ENCODE measurements at regions of chr9 and their contacts with region 1.

Region 1: DNA sequence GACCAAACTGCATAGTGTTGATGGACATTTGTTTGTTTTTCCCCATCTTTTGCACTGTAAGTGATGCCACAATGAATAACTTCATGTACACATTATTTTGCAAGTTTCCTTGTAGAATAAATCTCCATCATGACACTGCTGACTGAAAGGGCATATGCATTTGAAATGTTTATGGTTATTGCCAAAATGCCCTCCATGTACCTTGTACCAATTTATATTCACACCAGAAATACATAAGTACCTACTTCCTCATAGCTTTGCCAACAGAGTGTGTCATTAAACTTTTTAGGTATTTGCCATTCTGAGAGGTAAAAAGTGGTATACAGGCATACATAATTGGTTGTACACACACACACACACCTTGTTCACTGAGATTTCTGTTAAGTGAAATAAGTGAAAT is 361.0 kb upstream of the PCSK5 start:
- DNase-seq: no peak
- H3K4me3 ChIP-seq: no peak overlapping the region
- H3K27ac ChIP-seq: no peak overlapping the region
- H3K4me1 ChIP-seq: no peaks in the 10 kb centered on the region
- H3K27me3 ChIP-seq: no peaks in the 10 kb centered on the region
- CTCF ChIP-seq: no peak

Region 2: DNA sequence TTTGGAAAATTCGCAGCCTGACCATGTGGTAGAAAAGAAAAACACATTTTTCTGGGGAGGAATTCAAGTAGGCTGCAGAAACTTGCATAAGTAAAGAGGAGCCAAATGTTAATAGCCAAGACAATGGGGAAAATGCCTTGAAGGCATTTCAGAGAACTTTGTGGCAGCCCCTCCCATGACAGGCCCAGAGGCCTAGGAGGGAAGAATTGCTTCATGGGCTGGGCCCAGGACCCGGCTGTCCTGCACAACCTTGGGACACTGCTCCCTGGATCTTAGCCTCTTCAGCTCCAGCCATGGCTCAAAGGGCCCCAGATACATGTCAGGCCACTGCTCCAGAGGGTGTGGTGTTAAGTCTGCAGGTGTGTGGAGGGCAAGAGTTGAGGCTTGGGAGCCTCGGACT is 282.5 kb before region 1 on chr9:
- CTCF ChIA-PET with region 1: no interaction called
- POLR2A ChIA-PET with region 1: no interaction called
- intact Hi-C with region 1: no loop called
- DNase-seq: no peak
- H3K4me3 ChIP-seq: no peak overlapping the region
- H3K27ac ChIP-seq: no peak overlapping the region
- H3K4me1 ChIP-seq: no peaks in the 10 kb centered on the region
- H3K27me3 ChIP-seq: peaks cover 7% of the 10 kb centered on the region
- CTCF ChIP-seq: no peak

Region 3: GRCh38 chr9:75588809-75589208 is 59.3 kb after region 1 on chr9:
- CTCF ChIA-PET with region 1: no interaction called
- POLR2A ChIA-PET with region 1: no interaction called
- intact Hi-C with region 1: loop called (anchors 10 kb)
- DNase-seq: no peak
- H3K4me3 ChIP-seq: no peak overlapping the region
- H3K27ac ChIP-seq: no peak overlapping the region
- H3K4me1 ChIP-seq: no peaks in the 10 kb centered on the region
- H3K27me3 ChIP-seq: no peaks in the 10 kb centered on the region
- CTCF ChIP-seq: no peak

Region 4: GRCh38 chr9:75909776-75910175 is 380.3 kb after region 1 on chr9:
- CTCF ChIA-PET with region 1: no interaction called
- POLR2A ChIA-PET with region 1: no interaction called
- intact Hi-C with region 1: no loop called
- DNase-seq: no peak
- H3K4me3 ChIP-seq: no peak overlapping the region
- H3K27ac ChIP-seq: no peak overlapping the region
- H3K4me1 ChIP-seq: no peaks in the 10 kb centered on the region
- H3K27me3 ChIP-seq: peaks cover 13% of the 10 kb centered on the region
- CTCF ChIP-seq: no peak